ENCODE measurements at regions of chr20 and their contacts with region 1.

Region 1: GRCh38 chr20:57654363-57654997 is 34.3 kb upstream of the ZBP1 start:
- DNase-seq: peak in 6 of 7 donors; percentile 38 to 77 (median 50)
- H3K4me3 ChIP-seq: no peak overlapping the region
- H3K27ac ChIP-seq: no peak overlapping the region
- H3K4me1 ChIP-seq: no peaks in the 10 kb centered on the region
- H3K27me3 ChIP-seq: no peaks in the 10 kb centered on the region
- CTCF ChIP-seq: peak; percentile 83 to 94 (median 92)
- POLR2A ChIP-seq: no peak

Region 2: GRCh38 chr20:57693002-57693640 is 38.6 kb after region 1 on chr20:
- intact Hi-C with region 1: no loop called
- DNase-seq: no peak
- H3K4me3 ChIP-seq: no peak overlapping the region
- H3K27ac ChIP-seq: peak overlapping the region in 1 of 5 donors; percentile 34
- H3K4me1 ChIP-seq: peaks cover 0 to 12% of the 10 kb centered on the region in 2 donors
- H3K27me3 ChIP-seq: no peaks in the 10 kb centered on the region
- CTCF ChIP-seq: no peak
- POLR2A ChIP-seq: no peak

Region 3: DNA sequence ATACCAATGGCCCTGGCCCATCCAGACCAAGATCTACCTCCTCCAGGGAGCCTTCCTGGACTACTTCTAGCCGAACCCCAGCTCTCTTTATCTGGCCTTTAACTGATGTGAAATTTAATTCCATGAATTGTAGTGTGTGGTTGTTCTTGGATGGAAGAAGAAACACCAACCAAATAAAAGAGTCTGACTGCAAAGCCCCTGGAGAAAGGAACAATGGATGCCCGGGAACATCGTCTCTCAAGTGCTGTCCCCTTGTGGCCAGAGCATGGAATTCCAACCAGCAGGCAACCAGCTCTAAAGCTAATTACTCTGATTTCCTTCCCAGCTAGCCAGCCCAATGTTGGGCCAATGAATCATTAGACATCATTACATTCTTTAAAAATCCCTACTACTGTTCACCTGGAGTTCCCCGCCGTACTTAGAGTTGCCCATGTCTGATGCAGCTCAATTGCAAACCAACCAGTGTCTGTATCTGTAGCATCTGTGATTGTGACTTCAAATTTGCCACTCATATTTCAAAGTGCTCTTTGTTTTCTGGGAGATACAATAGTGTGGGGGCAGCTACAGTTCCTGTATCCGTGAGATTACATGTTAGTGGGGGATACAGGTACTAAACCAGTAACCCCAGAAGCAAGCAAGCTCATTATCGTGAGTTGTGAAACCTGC is 432.8 kb after region 1 on chr20:
- intact Hi-C with region 1: loop called (anchors 5 to 10 kb)
- DNase-seq: peak in 5 of 7 donors; percentile 18 to 59 (median 29)
- H3K4me3 ChIP-seq: no peak overlapping the region
- H3K27ac ChIP-seq: no peak overlapping the region
- H3K4me1 ChIP-seq: no peaks in the 10 kb centered on the region
- H3K27me3 ChIP-seq: no peaks in the 10 kb centered on the region
- CTCF ChIP-seq: peak; percentile 61 to 82 (median 74)
- POLR2A ChIP-seq: no peak

Region 4: DNA sequence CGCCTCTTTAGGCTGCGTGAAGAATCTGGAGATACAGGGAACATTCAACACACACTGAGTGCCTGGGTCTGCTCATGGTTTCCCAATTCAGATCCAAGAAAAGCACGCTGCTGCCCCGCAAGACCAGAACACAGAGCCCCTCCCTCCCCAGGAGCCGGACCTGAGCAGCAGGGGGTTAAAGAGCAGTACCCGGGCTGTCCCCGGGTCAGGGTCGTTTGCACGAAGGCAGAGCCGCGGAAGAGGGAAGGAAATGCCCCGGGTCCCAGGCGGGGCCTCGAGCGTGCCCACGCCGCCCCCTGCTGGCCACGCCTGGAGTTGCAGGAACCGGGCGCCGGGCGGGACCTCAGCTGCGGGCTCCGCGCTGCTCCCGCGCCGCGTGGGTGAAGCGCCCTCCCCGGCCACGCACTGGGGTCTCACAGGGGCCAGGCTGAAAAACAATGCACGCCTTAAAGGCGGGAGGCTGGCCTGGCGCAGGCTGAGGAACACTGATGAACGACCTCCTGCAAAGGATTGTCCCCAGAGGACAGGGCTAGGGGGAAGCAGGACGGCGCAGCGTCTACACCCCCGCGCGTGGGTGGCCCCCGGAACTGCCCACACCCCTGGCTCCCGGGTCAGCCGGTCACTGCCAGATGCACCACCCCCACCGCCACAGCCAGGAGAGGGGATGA is 525.1 kb after region 1 on chr20:
- intact Hi-C with region 1: loop called (anchors 5 to 10 kb)
- DNase-seq: peak in 6 of 7 donors; percentile 21 to 61 (median 50)
- H3K4me3 ChIP-seq: peak overlapping the region in 1 of 4 donors; percentile 41
- H3K27ac ChIP-seq: no peak overlapping the region
- H3K4me1 ChIP-seq: peaks cover 0 to 9% of the 10 kb centered on the region in 2 donors
- H3K27me3 ChIP-seq: no peaks in the 10 kb centered on the region
- CTCF ChIP-seq: peak; percentile 71 to 99 (median 90)
- POLR2A ChIP-seq: no peak

Measured in adrenal gland (tissue), 19 donors.